Activated naive CD4-positive, alpha-beta T cell treated with anti-CD3 and anti-CD28 coated beads for 36 hours (primary cell): ENCODE measurements at regions of chr17 and their contacts with region 1.

Region 1: DNA sequence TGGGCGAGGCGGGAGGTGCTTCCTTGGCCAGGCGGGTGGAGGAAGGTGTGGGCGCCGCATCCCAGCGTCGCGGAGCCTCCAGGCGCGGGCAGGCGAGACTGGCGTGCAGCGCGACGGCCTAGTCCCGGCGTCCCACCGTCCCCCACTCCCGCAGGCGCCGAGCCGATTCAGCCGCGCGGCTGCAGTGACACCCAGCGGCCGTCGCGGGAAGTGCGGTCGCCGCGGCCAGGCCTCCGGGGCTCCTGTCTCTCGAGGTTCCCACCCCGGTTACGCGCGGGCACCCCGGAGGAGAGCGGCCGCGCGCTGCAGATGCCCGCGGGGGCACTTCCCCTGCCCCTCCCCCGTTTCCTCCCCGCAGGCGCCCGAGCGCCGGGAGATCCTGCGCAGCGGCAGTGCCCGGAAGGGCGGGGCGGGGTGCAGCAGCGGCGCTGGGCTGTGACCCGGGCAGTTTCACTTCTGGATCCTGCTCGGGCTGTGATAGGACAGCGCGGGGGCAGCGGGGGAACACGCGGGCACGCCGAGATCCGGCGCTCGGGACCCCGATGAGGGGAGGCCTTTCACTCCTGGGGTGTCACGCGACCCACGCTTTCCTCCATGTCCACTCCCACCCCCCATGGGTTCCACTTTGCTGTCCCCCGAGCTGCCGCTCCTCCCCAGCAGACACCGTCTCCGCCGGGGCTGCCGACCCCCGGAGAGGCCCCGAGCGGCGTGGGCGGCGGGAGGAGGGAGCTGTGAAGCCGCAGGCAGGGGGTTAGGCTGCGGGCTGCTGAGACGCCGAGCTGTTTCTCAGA is 16.6 kb downstream of the GRB7 start:
- DNase-seq: peak; percentile 96
- H3K4me3 Mint-ChIP-seq: peak overlapping the region; percentile 76
- H3K27ac Mint-ChIP-seq: peak overlapping the region; percentile 59
- H3K4me1 Mint-ChIP-seq: peaks cover 59% of the 10 kb centered on the region
- H3K27me3 Mint-ChIP-seq: no peaks in the 10 kb centered on the region

Region 2: DNA sequence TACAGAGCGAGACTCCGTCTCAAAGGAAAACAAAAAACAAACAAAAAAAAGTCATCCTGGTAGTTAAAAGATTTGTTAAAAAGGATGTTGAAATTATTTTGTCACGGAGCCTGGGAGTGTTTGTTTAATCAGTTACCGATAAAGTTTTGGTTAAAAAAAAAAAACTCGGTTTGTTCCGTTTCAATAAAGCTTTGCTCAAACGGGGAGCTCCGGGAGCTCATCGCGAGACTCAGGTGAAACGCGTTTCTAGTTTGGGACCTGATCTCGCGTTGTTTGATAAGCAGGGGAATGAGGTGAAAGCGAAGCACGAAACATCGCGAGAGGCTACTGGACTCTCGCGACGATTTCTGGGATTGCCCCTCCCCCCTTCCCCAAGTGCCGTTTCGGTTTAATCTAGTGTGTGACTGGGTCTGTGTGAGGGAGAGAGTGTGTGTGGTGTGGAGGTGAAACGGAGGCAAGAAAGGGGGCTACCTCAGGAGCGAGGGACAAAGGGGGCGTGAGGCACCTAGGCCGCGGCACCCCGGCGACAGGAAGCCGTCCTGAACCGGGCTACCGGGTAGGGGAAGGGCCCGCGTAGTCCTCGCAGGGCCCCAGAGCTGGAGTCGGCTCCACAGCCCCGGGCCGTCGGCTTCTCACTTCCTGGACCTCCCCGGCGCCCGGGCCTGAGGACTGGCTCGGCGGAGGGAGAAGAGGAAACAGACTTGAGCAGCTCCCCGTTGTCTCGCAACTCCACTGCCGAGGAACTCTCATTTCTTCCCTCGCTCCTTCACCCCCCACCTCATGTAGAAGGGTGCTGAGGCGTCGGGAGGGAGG is 293.0 kb before region 1 on chr17 and contains the start of gene CDK12:
- CTCF ChIA-PET with region 1: no interaction called
- intact Hi-C with region 1: loop called (anchors 5 kb)
- DNase-seq: peak; percentile 98
- H3K4me3 Mint-ChIP-seq: peak within 1 kb of the TSS; percentile 82
- H3K27ac Mint-ChIP-seq: peak within 1 kb of the TSS; percentile 89
- H3K4me1 Mint-ChIP-seq: peaks cover 29% of the 10 kb centered on the region
- H3K27me3 Mint-ChIP-seq: no peaks in the 10 kb centered on the region
- total RNA-seq, gene CDK12: 49.8 to 51.0 TPM

Region 3: DNA sequence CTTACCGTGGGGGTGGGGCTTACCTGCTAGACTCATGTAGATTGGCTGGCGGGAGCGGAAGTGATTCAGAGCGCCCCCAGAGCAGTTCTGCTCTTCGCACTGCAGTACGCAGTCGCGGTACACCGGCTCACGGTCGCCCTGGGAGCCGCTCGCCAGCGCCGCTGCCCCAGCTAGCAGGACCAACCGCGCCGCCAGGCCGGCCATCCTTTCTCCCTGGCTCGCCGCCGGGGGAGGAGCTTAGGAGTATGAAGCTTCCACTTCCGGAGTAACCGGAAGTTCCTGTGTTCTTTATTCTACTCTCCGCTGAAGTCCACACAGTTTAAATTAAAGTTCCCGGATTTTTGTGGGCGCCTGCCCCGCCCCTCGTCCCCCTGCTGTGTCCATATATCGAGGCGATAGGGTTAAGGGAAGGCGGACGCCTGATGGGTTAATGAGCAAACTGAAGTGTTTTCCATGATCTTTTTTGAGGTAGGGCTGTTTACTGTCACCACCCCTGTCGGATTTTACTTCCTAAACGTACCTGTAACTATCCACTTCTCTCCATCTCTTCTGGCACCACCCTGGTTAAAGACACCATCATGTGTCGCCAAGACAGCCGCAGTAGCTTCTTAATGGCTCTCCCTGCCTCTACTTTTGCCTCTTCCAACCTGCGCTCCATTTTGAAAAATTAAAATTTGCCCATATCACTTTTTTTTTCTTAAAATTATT is 66.4 kb before region 1 on chr17 and contains the start of gene PGAP3:
- CTCF ChIA-PET with region 1: no interaction called
- intact Hi-C with region 1: loop called (anchors 2 kb)
- DNase-seq: peak; percentile 89
- H3K4me3 Mint-ChIP-seq: peak within 1 kb of the TSS; percentile 98
- H3K27ac Mint-ChIP-seq: peak within 1 kb of the TSS; percentile 94
- H3K4me1 Mint-ChIP-seq: peaks cover 15% of the 10 kb centered on the region
- H3K27me3 Mint-ChIP-seq: no peaks in the 10 kb centered on the region
- total RNA-seq, gene PGAP3: 11.8 to 11.9 TPM

Region 4: DNA sequence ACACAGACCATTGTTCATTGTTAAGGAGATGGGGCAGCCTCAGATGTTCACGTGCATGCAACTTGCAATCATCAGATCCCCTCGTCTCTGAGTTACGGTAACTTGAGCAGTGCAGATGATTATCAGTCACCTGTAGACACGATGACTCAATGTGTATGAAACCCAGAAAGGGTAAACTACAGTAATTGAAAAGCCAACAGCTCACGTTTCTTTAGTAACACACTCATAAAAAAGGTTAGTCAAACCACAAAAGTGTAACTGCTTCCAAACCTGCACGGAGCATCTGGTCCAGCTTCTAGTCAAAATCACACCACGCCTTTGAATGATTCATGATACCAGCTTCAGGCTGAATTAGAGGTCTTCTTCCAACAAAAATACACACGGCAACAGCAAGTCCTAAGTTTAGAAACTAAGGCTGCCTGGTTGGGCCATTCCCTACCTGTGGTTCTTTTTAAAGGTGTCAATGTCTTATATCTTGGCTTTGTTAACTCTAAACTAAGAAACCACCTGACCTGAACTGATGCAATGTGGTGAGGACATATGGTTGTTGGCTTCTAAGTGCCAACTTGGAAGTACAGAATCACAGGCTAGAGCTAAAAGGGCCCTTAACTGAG is 15.7 kb after region 1 on chr17:
- CTCF ChIA-PET with region 1: interaction called, 3 read pairs
- intact Hi-C with region 1: loop called (anchors 1 kb)
- DNase-seq: peak; percentile 86
- H3K4me3 Mint-ChIP-seq: no peak overlapping the region
- H3K27ac Mint-ChIP-seq: peak overlapping the region; percentile 86
- H3K4me1 Mint-ChIP-seq: peaks cover 88% of the 10 kb centered on the region
- H3K27me3 Mint-ChIP-seq: no peaks in the 10 kb centered on the region

Region 5: DNA sequence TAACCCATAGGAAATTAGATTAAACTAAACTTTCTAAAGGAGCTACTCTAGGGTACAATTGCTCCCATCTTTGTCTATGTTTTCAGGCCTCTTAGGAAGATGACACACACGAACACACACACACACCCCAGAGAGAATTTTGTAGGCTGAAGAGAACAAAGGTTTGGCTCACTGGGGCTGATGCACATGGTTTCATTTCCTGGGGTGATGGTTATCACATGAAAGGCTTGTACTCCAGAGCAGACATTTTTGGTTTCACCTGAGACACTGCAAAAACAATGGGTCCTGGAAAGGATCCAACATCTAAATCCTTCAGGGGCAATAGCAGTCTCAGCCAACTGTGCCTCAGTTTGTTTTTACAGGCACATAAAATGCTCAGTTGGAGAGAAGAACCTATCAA is 46.2 kb after region 1 on chr17:
- CTCF ChIA-PET with region 1: no interaction called
- intact Hi-C with region 1: loop called (anchors 1 kb)
- DNase-seq: peak; percentile 79
- H3K4me3 Mint-ChIP-seq: no peak overlapping the region
- H3K27ac Mint-ChIP-seq: peak overlapping the region; percentile 55
- H3K4me1 Mint-ChIP-seq: peaks cover 48% of the 10 kb centered on the region
- H3K27me3 Mint-ChIP-seq: no peaks in the 10 kb centered on the region

Region 6: GRCh38 chr17:39927101-39927928 is 173.0 kb after region 1 on chr17 and contains the starts of genes LRRC3C and ORMDL3:
- CTCF ChIA-PET with region 1: no interaction called
- intact Hi-C with region 1: loop called (anchors 1 kb)
- DNase-seq: peak; percentile 94
- H3K4me3 Mint-ChIP-seq: peak within 1 kb of the TSS; percentile 98
- H3K27ac Mint-ChIP-seq: peak within 1 kb of the TSS; percentile 94
- H3K4me1 Mint-ChIP-seq: peaks cover 56% of the 10 kb centered on the region
- H3K27me3 Mint-ChIP-seq: no peaks in the 10 kb centered on the region
- total RNA-seq, gene LRRC3C: not detected
- total RNA-seq, gene ORMDL3: 51.8 to 52.1 TPM